ENCODE measurements at regions of chr16 and their contacts with region 1.

Region 1: GRCh38 chr16:4307215-4308037 is 8.4 kb upstream of the GLIS2 start:
- DNase-seq: peak; percentile 90 to 99 (median 96)
- ATAC-seq: peak; percentile 88
- H3K4me3 ChIP-seq: peak overlapping the region; percentile 57 to 71
- H3K4me3 Mint-ChIP-seq: peak overlapping the region; percentile 91
- H3K27ac ChIP-seq: peak overlapping the region; percentile 55 to 96
- H3K27ac Mint-ChIP-seq: peak overlapping the region; percentile 97
- H3K4me1 ChIP-seq: peaks cover 16% of the 10 kb centered on the region
- H3K4me1 Mint-ChIP-seq: peaks cover 26% of the 10 kb centered on the region
- H3K27me3 ChIP-seq: peaks cover 0 to 3% of the 10 kb centered on the region in 2 experiments
- H3K27me3 Mint-ChIP-seq: no peaks in the 10 kb centered on the region
- CTCF ChIP-seq: no peak

Region 2: DNA sequence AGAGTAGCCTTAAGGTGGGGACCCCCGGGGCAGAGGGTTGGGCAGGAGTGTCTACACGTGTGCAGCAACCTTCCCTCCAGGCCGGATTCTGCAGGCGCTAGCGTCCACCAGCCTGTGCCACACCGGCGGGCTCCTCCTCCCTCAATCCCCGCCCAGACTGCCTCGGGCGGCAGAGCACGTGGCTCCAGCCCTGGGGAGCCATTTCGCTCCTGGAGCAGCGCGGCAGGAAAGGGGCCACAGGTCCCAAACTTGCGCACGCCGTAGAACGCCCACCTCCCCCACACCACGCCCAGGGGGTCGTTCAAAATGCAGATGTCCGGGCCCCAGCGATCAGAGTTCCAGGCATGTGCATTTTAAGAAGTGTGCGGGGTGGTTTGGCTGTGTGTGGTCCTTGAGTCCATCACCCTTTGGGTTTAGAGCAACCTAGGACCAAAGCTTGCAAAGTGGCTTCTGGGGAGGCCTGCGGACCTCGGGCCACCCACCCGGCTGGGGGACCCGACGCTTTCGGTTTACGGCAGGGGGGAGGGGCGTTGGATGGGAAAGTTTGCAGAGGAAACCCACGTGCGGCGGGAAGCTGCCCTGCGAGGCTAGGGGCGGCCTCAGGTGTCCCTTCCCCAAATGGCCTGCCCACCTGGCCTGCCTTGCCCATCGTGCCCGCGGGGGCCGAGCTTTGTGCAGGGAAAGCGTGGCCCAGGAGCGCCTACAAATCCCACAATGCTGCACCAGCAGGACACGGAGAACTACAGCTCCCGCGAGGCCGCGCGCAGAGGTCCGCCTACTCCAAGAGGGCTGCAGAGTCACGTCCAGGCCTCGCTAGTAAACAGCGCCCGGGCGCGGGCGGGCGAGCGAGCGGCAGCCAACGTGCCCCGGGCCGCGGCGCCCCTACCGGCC is 36.0 kb before region 1 on chr16:
- CTCF ChIA-PET with region 1: no interaction called
- POLR2A ChIA-PET with region 1: interaction called, 25 read pairs
- intact Hi-C with region 1: loop called (anchors 1 kb)
- DNase-seq: peak; percentile 72 to 93 (median 89)
- ATAC-seq: peak; percentile 84
- H3K4me3 ChIP-seq: peak overlapping the region; percentile 91 to 99
- H3K4me3 Mint-ChIP-seq: peak overlapping the region; percentile 88
- H3K27ac ChIP-seq: peak overlapping the region; percentile 50 to 76
- H3K27ac Mint-ChIP-seq: peak overlapping the region; percentile 57
- H3K4me1 ChIP-seq: peaks cover 13% of the 10 kb centered on the region
- H3K4me1 Mint-ChIP-seq: peaks cover 15% of the 10 kb centered on the region
- H3K27me3 ChIP-seq: no peaks in the 10 kb centered on the region
- H3K27me3 Mint-ChIP-seq: no peaks in the 10 kb centered on the region
- CTCF ChIP-seq: no peak

Region 3: GRCh38 chr16:4330277-4330874 is 22.9 kb after region 1 on chr16:
- CTCF ChIA-PET with region 1: interaction called, 99 read pairs
- POLR2A ChIA-PET with region 1: interaction called, 3 read pairs
- intact Hi-C with region 1: loop called (anchors 1 kb)
- DNase-seq: peak; percentile 49 to 84 (median 75)
- ATAC-seq: peak; percentile 68
- H3K4me3 ChIP-seq: no peak overlapping the region
- H3K4me3 Mint-ChIP-seq: no peak overlapping the region
- H3K27ac ChIP-seq: no peak overlapping the region
- H3K27ac Mint-ChIP-seq: no peak overlapping the region
- H3K4me1 ChIP-seq: peaks cover 14% of the 10 kb centered on the region
- H3K4me1 Mint-ChIP-seq: peaks cover 5% of the 10 kb centered on the region
- H3K27me3 ChIP-seq: no peaks in the 10 kb centered on the region
- H3K27me3 Mint-ChIP-seq: no peaks in the 10 kb centered on the region
- CTCF ChIP-seq: peak; percentile 91

Region 4: GRCh38 chr16:4416200-4417032 is 109.0 kb after region 1 on chr16 and contains the start of gene CORO7:
- CTCF ChIA-PET with region 1: no interaction called
- POLR2A ChIA-PET with region 1: no interaction called
- intact Hi-C with region 1: loop called in 1 of 2 experiments (anchors 1 kb)
- DNase-seq: peak; percentile 98 to 100 (median 99)
- ATAC-seq: peak; percentile 78
- H3K4me3 ChIP-seq: peak within 1 kb of the TSS; percentile 51 to 60
- H3K4me3 Mint-ChIP-seq: peak within 1 kb of the TSS; percentile 97
- H3K27ac ChIP-seq: peak within 1 kb of the TSS; percentile 89 to 94
- H3K27ac Mint-ChIP-seq: peak within 1 kb of the TSS; percentile 99
- H3K4me1 ChIP-seq: peaks cover 44% of the 10 kb centered on the region
- H3K4me1 Mint-ChIP-seq: peaks cover 33% of the 10 kb centered on the region
- H3K27me3 ChIP-seq: no peaks in the 10 kb centered on the region
- H3K27me3 Mint-ChIP-seq: no peaks in the 10 kb centered on the region
- CTCF ChIP-seq: no peak
- total RNA-seq, gene CORO7: 950 to 991 TPM

Region 5: DNA sequence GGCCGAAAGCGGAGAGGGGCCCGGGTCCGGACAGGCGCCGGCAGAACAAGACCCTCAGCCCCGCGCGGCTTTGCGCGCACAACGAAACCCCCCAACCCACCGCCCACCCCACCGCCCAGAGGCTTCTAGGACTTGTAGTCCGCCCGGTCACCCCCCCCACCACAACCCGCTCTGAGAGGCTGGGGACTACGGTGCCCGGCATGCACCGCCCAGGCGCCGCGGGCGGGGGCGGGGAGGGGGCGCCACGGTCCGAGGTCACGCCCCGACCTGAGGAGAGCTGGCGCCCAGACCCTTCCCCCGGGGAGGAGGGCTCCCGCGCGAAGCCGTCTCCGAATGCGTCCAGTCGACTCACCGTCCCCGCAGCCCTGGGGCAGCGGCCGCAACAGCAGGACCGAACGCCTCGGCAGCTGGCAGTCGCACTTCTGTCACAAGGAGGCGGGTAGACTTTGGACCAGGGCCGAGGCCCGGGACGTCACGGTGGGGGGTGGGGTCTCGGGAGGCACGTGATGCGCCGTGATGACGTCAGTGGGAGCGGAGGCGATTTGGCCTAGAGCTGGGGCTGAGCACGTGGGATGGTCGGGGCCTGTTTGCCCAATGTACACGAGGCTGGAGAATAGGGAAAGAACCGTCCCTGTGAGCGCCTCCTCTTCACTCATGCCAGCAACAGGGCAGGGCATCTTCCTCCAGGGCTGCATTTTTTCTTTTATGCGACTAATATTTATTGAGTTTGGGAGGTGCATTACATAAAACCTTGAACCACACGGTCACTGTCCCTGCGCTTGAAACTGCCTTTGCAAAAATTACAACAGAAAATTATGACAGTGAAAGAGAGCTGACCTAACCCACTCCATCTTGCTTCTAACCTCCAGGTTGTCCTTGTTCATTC is 231.2 kb after region 1 on chr16 and contains the start of gene CDIP1:
- CTCF ChIA-PET with region 1: no interaction called
- POLR2A ChIA-PET with region 1: no interaction called
- intact Hi-C with region 1: loop called in 1 of 2 experiments (anchors 5 kb)
- DNase-seq: peak; percentile 88 to 98 (median 94)
- ATAC-seq: peak; percentile 86
- H3K4me3 ChIP-seq: peak within 1 kb of the TSS; percentile 71
- H3K4me3 Mint-ChIP-seq: peak within 1 kb of the TSS; percentile 80
- H3K27ac ChIP-seq: peak within 1 kb of the TSS; percentile 86 to 90
- H3K27ac Mint-ChIP-seq: peak within 1 kb of the TSS; percentile 92
- H3K4me1 ChIP-seq: peaks cover 45% of the 10 kb centered on the region
- H3K4me1 Mint-ChIP-seq: peaks cover 39% of the 10 kb centered on the region
- H3K27me3 ChIP-seq: no peaks in the 10 kb centered on the region
- H3K27me3 Mint-ChIP-seq: no peaks in the 10 kb centered on the region
- CTCF ChIP-seq: no peak
- total RNA-seq, gene CDIP1: 21.7 to 25.0 TPM